Heart right ventricle (tissue), 16 donors: ENCODE measurements at regions of chr18 and their contacts with region 1.

Region 1: DNA sequence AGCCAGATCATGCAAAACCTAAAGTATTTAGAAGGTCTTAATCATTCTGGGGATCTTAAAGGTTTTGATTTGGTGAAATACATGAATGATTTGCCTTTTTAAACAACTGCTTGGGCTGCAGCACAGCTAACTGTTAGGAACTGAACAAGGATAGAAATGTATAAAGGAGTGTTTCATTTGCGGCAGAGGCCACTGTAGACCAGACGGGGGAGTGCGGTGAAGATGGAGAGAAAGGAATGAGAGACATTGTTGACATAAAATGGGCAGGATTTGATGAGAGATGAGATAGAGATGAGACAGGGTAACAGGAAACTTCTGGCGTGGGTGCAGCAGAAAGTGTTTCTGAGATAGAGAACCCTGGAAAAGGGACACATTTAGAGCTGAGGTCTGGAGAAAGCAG is 308.1 kb downstream of the TMX3 start:
- DNase-seq: no peak
- ATAC-seq: no peak
- H3K4me3 ChIP-seq: no peak overlapping the region
- H3K27ac ChIP-seq: no peak overlapping the region
- H3K4me1 ChIP-seq: no peaks in the 10 kb centered on the region
- H3K27me3 ChIP-seq: no peaks in the 10 kb centered on the region
- CTCF ChIP-seq: no peak

Region 2: DNA sequence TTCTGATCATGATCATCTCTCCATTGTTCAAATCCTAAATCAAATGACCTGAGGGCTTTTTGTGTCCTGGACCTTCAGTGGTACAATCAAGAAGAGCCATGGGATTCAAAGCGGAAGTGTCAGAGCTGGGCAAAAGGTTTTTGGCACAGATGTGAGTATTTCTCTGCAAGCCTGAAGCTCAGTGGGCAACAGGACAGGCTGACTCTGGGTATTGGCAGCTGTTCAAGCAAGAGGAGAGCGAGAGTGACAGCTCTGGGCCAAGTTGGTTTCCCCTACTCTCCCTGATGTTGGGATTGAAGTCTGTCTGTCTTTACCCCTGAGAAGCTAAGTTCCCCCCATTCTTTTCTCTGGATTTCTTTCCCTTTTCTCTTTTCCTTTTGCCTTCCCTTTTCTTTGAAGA is 923.5 kb before region 1 on chr18:
- intact Hi-C with region 1: loop called in 1 of 10 experiments (anchors 10 kb)
- DNase-seq: no peak
- ATAC-seq: no peak
- H3K4me3 ChIP-seq: no peak overlapping the region
- H3K27ac ChIP-seq: no peak overlapping the region
- H3K4me1 ChIP-seq: no peaks in the 10 kb centered on the region
- H3K27me3 ChIP-seq: no peaks in the 10 kb centered on the region
- CTCF ChIP-seq: no peak